ENCODE measurements at regions of chr4 and their contacts with region 1.

Region 1: DNA sequence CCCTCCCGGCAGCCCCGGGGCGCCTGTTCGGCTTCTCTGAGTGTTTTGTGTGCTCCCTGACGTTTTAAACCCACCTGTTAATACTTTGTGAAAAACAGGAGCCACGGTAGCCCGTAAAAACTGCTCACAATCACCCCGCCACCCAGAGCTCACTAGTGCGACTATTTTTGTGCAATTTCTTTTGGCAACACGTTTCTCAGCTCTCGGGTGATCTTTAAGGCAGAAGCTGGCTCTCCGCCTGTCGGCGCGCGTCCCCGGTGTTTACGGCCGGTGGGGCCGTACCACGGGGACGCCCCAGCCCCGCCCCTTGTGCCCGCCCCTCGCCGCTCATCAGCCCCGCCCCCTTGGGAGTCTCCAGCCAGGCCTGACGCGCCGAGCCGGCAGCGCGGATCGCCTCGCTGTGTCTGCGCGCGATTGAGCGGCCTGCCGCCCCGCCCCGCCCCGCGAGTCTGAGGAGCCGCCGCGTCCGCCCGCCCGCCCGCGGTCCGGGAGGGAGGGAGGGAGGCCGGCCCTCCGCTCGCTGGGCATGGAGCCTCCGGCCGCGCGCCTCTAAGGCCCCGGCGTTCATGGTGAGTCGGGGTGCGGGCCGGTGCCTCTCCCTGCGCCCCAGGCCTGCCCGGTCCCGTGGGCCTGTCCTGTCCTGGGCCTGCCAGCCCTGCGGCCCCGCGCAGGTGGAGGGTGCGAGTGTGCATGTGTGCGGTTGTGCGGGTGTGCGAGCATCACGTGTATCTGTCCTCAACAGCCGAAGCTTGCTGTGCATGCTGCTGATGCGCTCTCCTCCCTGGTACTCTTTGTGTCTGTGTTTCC is 56.2 kb upstream of the TADA2B start:
- DNase-seq: peak; percentile 95
- ATAC-seq: peak; percentile 89
- H3K4me3 Mint-ChIP-seq: peak overlapping the region; percentile 92
- H3K27ac Mint-ChIP-seq: peak overlapping the region; percentile 92
- H3K4me1 Mint-ChIP-seq: peaks cover 58% of the 10 kb centered on the region
- H3K27me3 Mint-ChIP-seq: no peaks in the 10 kb centered on the region

Region 2: GRCh38 chr4:6917461-6918271 is 69.3 kb before region 1 on chr4:
- POLR2A ChIA-PET with region 1: interaction called, 10 read pairs
- DNase-seq: peak; percentile 57
- ATAC-seq: peak; percentile 58
- H3K4me3 Mint-ChIP-seq: peak overlapping the region; percentile 69
- H3K27ac Mint-ChIP-seq: peak overlapping the region; percentile 89
- H3K4me1 Mint-ChIP-seq: peaks cover 38% of the 10 kb centered on the region
- H3K27me3 Mint-ChIP-seq: no peaks in the 10 kb centered on the region

Region 3: DNA sequence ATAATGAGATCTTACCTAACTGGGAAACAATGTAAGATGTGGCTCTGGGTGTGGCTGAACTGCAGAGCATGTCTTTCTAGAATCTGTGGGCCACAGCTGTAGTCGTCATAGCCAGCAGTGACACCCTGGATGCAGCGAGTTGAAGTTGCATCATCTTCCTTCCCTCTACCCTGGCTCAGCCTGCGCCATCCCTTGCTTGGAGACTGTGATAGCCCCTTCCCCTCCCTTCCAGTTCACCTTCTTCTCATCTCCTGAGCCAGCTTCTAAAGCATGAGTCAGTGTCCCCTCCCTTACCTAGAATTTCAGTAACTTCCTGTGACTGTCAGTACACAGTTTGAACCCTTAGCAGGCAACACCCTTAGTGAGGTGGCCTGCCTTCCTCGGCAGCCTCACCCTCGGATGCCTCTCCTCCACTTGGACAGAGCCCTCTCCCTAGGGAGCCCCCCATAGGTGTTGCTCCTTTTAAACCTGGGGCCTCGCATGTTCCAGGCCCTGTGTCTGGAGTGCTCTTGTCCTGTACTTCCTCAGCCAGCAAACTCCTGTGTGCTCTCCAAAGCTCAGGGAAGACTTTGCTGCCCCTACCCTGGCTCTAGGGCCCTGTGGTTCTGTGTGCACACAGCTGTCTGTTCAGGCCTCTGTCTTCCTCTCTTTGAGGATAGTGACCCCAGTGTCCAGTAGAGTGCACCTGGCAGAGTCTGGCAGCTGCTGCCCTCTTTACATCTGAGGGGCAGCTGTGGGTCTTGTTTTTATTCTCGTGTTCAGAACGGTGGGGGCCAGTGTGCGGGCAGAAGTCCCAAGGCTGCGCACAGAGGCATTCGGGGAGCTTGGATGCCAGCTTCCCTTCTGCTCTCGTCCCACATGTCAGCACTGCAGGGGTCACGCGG is 12.4 kb after region 1 on chr4:
- POLR2A ChIA-PET with region 1: interaction called, 12 read pairs
- DNase-seq: peak; percentile 40
- ATAC-seq: peak; percentile 98
- H3K4me3 Mint-ChIP-seq: peak overlapping the region; percentile 65
- H3K27ac Mint-ChIP-seq: peak overlapping the region; percentile 92
- H3K4me1 Mint-ChIP-seq: peaks cover 18% of the 10 kb centered on the region
- H3K27me3 Mint-ChIP-seq: no peaks in the 10 kb centered on the region

Region 4: DNA sequence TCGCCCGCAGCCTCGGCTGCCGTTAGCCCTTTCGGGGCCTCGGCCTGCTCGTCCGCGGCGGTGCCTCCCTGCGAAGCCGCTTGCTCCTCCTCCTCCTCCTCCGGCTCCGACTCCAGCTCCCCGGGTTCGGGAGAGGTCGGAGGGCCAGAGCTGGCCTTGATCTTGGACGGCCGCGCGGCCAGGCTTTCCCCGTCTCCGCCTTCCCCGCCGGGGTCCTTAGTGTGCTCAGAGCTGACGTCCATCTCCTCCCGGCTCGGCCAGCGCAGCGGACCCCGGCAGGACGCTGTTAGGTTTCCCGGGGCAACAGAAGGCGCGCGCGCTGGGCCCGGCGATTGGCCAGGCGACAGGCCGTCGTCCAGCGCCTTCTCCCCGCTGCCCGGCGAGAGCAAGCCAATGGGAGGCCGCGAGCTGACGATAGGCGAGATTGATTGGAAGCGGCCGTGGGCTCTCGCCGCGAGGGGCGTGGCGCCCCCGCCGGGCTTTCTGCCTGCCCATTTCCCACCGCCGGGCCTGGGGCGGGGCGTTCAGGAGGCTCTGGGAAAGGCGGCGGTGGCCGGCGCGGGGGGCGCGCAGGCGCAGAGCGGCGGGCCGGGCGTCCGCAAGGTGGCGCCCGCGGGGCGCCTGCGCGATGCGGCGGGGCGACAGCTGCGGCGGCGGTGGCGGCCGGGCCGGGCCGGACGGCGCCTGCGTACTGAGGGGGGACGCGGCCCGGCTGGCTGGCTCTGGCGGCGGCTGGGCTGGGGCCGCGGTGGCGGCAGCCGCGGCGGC is 55.9 kb after region 1 on chr4 and contains the start of gene TADA2B:
- POLR2A ChIA-PET with region 1: interaction called, 13 read pairs
- DNase-seq: peak; percentile 98
- ATAC-seq: peak; percentile 85
- H3K4me3 Mint-ChIP-seq: peak within 1 kb of the TSS; percentile 96
- H3K27ac Mint-ChIP-seq: peak within 1 kb of the TSS; percentile 91
- H3K4me1 Mint-ChIP-seq: peaks cover 35% of the 10 kb centered on the region
- H3K27me3 Mint-ChIP-seq: peaks cover 6% of the 10 kb centered on the region
- total RNA-seq, gene TADA2B: 25.8 to 27.1 TPM

Measured in activated naive CD8-positive, alpha-beta T cell treated with anti-CD3 and anti-CD28 coated beads, Interleukin-2, amount 10 ng/mL, durations not matched to agents 7 days and 5 days (primary cell).